GM12878 (cell line): ENCODE measurements at regions of chr2 and their contacts with region 1.

Region 1: GRCh38 chr2:45729753-45730512 is 78.5 kb downstream of the PRKCE start:
- DNase-seq: peak; percentile 88
- ATAC-seq: peak; percentile 79
- H3K4me3 ChIP-seq: no peak overlapping the region
- H3K27ac ChIP-seq: peak overlapping the region; percentile 72
- H3K4me1 ChIP-seq: peaks cover 44% of the 10 kb centered on the region
- H3K27me3 ChIP-seq: no peaks in the 10 kb centered on the region
- CTCF ChIP-seq: peak; percentile 43 to 70 (median 55)
- EP300 ChIP-seq: peak; percentile 93
- POLR2A ChIP-seq: no peak; the same call in 1 of the 2 replicates
- RAD21 ChIP-seq: peak; percentile 54

Region 2: DNA sequence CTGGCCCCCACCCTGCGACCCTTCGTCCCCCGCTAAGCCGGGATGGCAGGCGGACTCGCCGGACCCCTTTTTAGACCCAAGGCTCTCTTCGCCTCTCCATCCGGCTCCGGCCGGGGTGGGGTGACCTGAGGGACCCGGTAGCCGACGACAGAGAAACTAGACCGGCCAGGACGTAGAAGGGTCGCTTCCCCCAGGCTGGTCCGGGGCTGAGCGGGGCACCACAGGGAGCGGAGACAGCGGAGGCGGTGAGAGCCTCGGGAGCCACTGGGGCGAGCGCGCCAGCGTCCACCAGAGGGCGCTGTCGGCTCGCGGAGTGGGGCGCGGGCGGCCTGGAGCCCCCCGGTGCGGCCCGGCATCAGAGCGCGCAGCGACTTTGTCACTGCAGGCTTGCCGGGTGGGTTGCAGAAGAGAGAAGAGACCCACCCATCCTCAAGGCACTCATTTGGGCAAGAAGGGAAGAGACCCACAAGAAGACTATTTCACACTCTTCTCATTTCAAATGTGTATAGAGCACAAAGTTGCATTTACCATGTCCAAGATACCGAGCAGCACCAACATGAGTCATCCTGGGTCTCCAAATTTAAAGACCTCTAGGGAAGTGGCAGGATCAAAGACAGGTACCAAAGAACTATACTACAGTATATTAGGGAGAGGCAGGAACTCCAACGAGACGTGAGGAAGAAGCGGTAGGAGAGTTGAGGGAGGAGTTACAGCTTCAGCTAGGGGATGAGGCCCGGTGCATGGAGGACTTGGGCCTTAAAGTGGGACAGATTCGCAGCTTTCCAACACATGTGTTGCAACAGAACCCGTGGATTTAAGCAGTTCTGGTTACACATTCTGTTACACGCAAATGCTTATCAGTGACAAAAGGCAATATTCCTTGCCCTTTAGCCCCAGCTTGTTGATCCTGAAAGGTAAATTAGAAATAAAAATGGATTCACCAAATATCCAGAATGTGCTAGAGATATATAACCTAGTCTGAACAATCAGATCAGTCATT is 86.1 kb before region 1 on chr2:
- CTCF ChIA-PET with region 1: interaction called, 5 read pairs
- POLR2A ChIA-PET with region 1: interaction called, 4 read pairs
- RAD21 ChIA-PET with region 1: interaction called, 4 read pairs
- SMC1A ChIA-PET with region 1: interaction called, 14 read pairs
- in situ Hi-C with region 1: no loop called
- intact Hi-C with region 1: no loop called
- DNase-seq: no peak
- ATAC-seq: peak; percentile 99
- H3K4me3 ChIP-seq: peak overlapping the region; percentile 69; the same call in 1 of the 2 replicates
- H3K27ac ChIP-seq: no peak overlapping the region
- H3K4me1 ChIP-seq: no peaks in the 10 kb centered on the region
- H3K27me3 ChIP-seq: no peaks in the 10 kb centered on the region; a peak in 1 of 4 replicates
- CTCF ChIP-seq: peak; percentile 80 to 84 (median 81)
- EP300 ChIP-seq: no peak
- POLR2A ChIP-seq: no peak
- RAD21 ChIP-seq: peak; percentile 93

Region 3: GRCh38 chr2:45684756-45685155 is 45.2 kb before region 1 on chr2:
- CTCF ChIA-PET with region 1: interaction called, 3 read pairs
- POLR2A ChIA-PET with region 1: interaction called, 3 read pairs
- RAD21 ChIA-PET with region 1: interaction called, 19 read pairs
- SMC1A ChIA-PET with region 1: interaction called, 10 read pairs
- in situ Hi-C with region 1: no loop called
- intact Hi-C with region 1: no loop called
- DNase-seq: no peak
- ATAC-seq: no peak
- H3K4me3 ChIP-seq: no peak overlapping the region
- H3K27ac ChIP-seq: no peak overlapping the region
- H3K4me1 ChIP-seq: peaks cover 6% of the 10 kb centered on the region
- H3K27me3 ChIP-seq: no peaks in the 10 kb centered on the region
- CTCF ChIP-seq: no peak
- EP300 ChIP-seq: no peak
- POLR2A ChIP-seq: no peak
- RAD21 ChIP-seq: no peak

Region 4: GRCh38 chr2:45699032-45699658 is 30.8 kb before region 1 on chr2:
- CTCF ChIA-PET with region 1: interaction called, 9 read pairs
- POLR2A ChIA-PET with region 1: interaction called, 3 read pairs
- RAD21 ChIA-PET with region 1: interaction called, 7 read pairs
- SMC1A ChIA-PET with region 1: interaction called, 29 read pairs
- in situ Hi-C with region 1: no loop called
- intact Hi-C with region 1: loop called (anchors 1 kb)
- DNase-seq: no peak
- ATAC-seq: peak; percentile 64
- H3K4me3 ChIP-seq: no peak overlapping the region
- H3K27ac ChIP-seq: peak overlapping the region; percentile 17
- H3K4me1 ChIP-seq: peaks cover 35% of the 10 kb centered on the region
- H3K27me3 ChIP-seq: no peaks in the 10 kb centered on the region
- CTCF ChIP-seq: no peak
- EP300 ChIP-seq: no peak
- POLR2A ChIP-seq: no peak
- RAD21 ChIP-seq: no peak

Region 5: DNA sequence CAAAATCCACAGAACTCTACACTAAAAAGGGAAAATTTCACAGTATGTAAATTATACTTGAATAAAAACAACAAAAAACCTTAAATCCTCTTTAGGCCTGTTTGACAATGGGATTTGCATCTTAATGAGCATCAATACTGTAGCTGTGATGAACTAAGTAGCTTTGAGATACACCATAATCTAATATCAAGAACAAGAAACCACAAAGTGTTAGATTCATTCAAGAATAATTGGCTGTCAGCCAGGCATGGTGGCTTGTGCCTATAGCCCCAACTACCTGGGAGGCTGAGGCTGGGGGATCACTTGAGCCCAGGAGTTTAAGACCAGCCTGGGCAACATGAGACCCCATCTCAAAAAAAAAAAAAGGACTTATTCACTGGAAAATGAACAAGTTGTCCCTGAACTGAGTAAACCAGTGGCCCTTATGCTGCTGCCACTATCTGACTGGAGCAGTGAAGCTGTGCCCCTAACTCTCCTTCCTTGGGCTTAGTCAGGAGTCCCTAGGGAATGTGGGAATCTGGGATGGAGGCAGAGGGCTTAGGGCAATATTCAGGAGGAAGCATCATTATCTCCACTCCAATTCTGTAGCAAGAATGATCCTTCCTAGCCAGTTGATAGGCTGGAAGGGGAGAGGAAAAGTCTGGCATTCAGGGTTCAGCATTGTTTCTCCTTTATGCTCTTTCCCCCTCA is 10.0 kb after region 1 on chr2:
- CTCF ChIA-PET with region 1: interaction called, 6 read pairs
- POLR2A ChIA-PET with region 1: interaction called, 3 read pairs
- RAD21 ChIA-PET with region 1: interaction called, 5 read pairs
- SMC1A ChIA-PET with region 1: interaction called, 16 read pairs
- in situ Hi-C with region 1: no loop called
- intact Hi-C with region 1: no loop called
- DNase-seq: no peak
- ATAC-seq: peak; percentile 20; the same call in 1 of the 3 replicates
- H3K4me3 ChIP-seq: no peak overlapping the region
- H3K27ac ChIP-seq: no peak overlapping the region
- H3K4me1 ChIP-seq: peaks cover 9% of the 10 kb centered on the region
- H3K27me3 ChIP-seq: no peaks in the 10 kb centered on the region
- CTCF ChIP-seq: no peak
- EP300 ChIP-seq: no peak
- POLR2A ChIP-seq: no peak
- RAD21 ChIP-seq: no peak

Region 6: DNA sequence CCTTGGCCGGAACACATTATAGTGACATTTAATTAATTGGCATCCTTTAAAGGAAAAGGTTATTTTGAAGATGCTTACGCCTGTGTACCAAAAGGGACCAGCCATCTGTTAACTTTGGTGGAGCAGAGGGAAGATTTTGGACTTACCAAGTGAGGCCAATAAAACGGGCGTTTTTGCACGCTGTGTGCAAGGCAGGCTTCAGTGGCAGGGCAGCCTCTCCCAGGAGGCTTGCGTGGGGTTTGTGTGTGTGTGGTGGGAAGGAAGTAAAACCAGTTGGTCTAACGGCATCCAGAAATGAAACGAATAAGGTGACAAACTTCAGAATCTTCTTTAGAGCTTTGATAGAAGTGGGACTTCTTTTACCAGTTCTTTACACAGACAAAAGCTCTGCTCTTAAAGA is 113.2 kb after region 1 on chr2:
- CTCF ChIA-PET with region 1: interaction called, 11 read pairs
- POLR2A ChIA-PET with region 1: interaction called, 12 read pairs
- RAD21 ChIA-PET with region 1: interaction called, 6 read pairs
- SMC1A ChIA-PET with region 1: interaction called, 4 read pairs
- in situ Hi-C with region 1: no loop called
- intact Hi-C with region 1: no loop called
- DNase-seq: no peak
- ATAC-seq: peak; percentile 76
- H3K4me3 ChIP-seq: peak overlapping the region; percentile 35; the same call in 1 of the 2 replicates
- H3K27ac ChIP-seq: peak overlapping the region; percentile 94
- H3K4me1 ChIP-seq: peaks cover 70% of the 10 kb centered on the region
- H3K27me3 ChIP-seq: no peaks in the 10 kb centered on the region
- CTCF ChIP-seq: no peak
- EP300 ChIP-seq: peak; percentile 91 to 97
- POLR2A ChIP-seq: no peak
- RAD21 ChIP-seq: no peak